Esophagus muscularis mucosa (tissue), 4 donors: ENCODE measurements at regions of chr12 and their contacts with region 1.

Region 1: DNA sequence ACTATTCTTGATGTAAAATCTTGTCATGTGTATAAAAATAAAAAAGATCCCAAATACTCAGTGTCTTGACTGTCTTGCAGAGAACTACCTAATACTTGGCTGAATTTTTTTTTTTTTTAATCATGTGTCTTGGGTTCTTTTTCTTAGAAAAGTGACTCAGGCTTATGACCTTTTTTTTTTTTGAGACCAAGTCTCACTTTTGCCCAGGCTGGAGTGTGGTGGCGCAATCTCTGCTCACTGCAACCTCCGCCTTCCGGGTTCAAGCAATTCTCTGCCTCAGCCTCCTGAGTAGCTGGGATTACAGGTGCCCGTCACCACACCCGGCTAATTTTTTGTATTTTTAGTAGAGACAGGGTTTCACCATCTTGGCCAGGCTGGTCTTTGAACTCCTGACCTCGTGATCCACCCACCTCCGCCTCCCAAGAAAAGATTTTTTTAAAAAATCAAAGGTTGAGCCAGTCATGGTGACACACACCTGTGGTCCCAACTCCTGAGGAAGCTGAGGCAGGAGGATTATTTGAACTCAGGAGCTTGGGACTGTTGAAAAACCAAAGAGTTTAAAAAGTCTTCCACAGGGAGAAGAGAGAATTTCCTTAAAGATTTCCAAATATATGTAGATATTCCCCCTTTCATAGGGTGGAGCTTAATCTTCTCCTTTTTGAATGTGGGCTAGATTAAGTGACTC is 17.7 kb upstream of the TDG start:
- DNase-seq: no peak
- H3K4me3 ChIP-seq: no peak overlapping the region
- H3K27ac ChIP-seq: no peak overlapping the region
- H3K4me1 ChIP-seq: no peaks in the 10 kb centered on the region
- H3K27me3 ChIP-seq: no peaks in the 10 kb centered on the region
- CTCF ChIP-seq: no peak
- EP300 ChIP-seq: no peak
- POLR2A ChIP-seq: no peak

Region 2: GRCh38 chr12:103771466-103771865 is 176.5 kb before region 1 on chr12:
- intact Hi-C with region 1: loop called (anchors 10 kb)
- DNase-seq: no peak
- H3K4me3 ChIP-seq: no peak overlapping the region
- H3K27ac ChIP-seq: peak overlapping the region in 2 of 4 donors; percentile 13 to 28
- H3K4me1 ChIP-seq: peaks cover 12 to 45% (median 31%) of the 10 kb centered on the region in 4 donors
- H3K27me3 ChIP-seq: no peaks in the 10 kb centered on the region
- CTCF ChIP-seq: peak; percentile 26 to 36 (median 31)
- EP300 ChIP-seq: no peak
- POLR2A ChIP-seq: no peak

Region 3: DNA sequence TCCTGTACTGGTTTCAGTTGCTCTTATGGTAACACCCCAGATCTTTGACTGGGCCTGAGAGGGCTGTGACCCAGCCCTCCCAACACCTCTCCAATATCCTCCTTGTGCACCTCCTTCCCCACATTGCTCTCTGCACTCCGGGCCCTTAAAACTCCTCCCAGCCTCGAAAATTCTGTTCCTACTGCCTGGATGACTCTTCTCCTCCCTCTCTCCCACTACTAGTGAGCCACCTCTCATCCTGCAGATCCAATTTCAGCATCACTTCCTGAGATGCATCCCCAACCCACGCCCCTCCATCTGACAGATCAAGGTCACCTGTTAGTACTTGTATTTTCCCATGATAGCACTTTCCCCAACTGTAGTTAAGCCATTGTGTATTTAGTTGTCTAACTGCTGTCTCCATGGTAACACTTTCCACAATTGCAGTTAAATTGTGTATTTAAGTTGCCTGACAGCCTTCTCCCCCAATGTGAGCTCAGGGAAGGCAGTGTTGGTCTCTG is 95.5 kb before region 1 on chr12:
- intact Hi-C with region 1: no loop called
- DNase-seq: no peak
- H3K4me3 ChIP-seq: no peak overlapping the region
- H3K27ac ChIP-seq: peak overlapping the region; percentile 83 to 97 (median 96)
- H3K4me1 ChIP-seq: peaks cover 0 to 99% (median 92%) of the 10 kb centered on the region in 4 donors
- H3K27me3 ChIP-seq: no peaks in the 10 kb centered on the region
- CTCF ChIP-seq: no peak
- EP300 ChIP-seq: no peak
- POLR2A ChIP-seq: no peak